Naive thymus-derived CD8-positive, alpha-beta T cell (primary cell): ENCODE measurements at regions of chr15 and their contacts with region 1.

Region 1: GRCh38 chr15:31302778-31303725 is 23.6 kb upstream of the KLF13 start:
- DNase-seq: peak in 3 of 10 donors; percentile 18 to 40 (median 37)
- ATAC-seq: peak; percentile 76
- H3K4me3 Mint-ChIP-seq: peak overlapping the region in 2 of 10 donors; percentile 24 to 27
- H3K27ac Mint-ChIP-seq: peak overlapping the region in 7 of 10 donors; percentile 29 to 81 (median 68)
- H3K4me1 Mint-ChIP-seq: peaks cover 19 to 46% (median 43%) of the 10 kb centered on the region in 4 donors
- H3K27me3 Mint-ChIP-seq: peaks cover 0 to 2% (median 0%) of the 10 kb centered on the region in 5 donors

Region 2: DNA sequence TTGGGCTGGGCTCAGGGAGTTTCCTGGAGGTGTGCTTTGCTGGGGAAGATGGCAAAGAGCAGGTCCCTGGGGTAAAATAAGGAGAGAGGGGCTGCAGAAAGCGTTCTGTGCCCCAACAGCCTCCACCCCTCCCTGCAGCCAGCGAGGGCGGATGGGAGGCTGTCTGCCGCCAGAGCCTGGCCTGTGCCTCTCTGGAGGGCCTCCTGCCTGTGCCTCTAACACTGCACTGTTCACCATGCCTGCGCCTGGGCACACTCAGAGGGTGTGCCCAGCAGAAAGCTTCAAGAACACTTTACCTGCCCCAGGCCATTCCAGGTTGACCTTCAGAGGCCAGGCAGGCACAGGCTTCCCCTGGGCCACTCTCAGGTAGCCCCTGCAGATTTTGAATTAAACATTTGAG is 54.1 kb before region 1 on chr15:
- POLR2A ChIA-PET with region 1: no interaction called
- DNase-seq: no peak
- ATAC-seq: no peak
- H3K4me3 Mint-ChIP-seq: no peak overlapping the region
- H3K27ac Mint-ChIP-seq: peak overlapping the region in 1 of 10 donors; percentile 73
- H3K4me1 Mint-ChIP-seq: peaks cover 5 to 18% (median 5%) of the 10 kb centered on the region in 4 donors
- H3K27me3 Mint-ChIP-seq: no peaks in the 10 kb centered on the region

Region 3: DNA sequence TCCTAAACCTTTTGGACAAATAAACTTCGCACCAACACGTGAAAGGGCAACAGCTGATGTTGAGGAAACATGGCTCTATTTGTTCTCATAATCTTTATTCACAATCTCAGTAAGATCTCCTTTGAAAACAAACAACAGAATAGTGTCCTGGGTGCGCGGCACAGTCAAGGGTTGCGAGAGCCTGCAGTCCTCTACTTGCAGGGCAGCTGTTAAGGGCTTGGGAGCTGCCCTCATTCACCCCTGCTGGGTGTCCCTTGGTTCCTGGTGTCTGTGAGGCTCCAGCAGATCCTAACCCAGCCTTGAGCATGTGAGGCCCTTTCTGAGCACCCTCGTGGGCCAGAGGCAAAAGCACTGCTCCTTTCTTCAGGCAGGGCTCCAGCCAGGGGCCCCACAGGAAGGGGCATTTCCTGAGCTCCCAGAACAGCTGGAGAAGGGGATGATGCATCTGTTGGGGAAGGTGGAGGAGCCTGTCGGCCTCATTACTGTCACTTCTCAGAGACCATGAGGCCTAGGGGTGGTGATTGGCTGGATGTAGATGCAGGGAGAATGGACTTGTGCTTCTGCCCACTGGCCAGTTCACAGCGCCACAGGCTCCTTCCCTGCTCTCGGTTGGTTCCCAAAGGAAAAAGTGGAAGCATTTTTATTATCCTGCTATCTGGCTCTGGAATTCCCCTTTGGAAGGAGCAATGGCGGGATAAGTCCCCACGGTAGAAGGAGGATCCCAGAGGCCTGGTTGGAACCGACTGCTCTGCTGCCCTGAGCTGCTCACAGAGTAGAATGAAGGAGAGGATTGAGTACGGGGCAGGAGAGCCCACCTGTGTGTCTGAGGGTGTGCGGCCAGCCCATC is 28.3 kb before region 1 on chr15:
- POLR2A ChIA-PET with region 1: interaction called, 10 read pairs
- DNase-seq: no peak
- ATAC-seq: no peak
- H3K4me3 Mint-ChIP-seq: no peak overlapping the region
- H3K27ac Mint-ChIP-seq: peak overlapping the region in 8 of 10 donors; percentile 14 to 76 (median 46)
- H3K4me1 Mint-ChIP-seq: peaks cover 11 to 47% (median 41%) of the 10 kb centered on the region in 4 donors
- H3K27me3 Mint-ChIP-seq: no peaks in the 10 kb centered on the region

Region 4: GRCh38 chr15:31316135-31316795 is 13.2 kb after region 1 on chr15:
- POLR2A ChIA-PET with region 1: interaction called, 12 read pairs
- DNase-seq: peak in 1 of 10 donors; percentile 47
- ATAC-seq: peak in 1 of 2 donors; percentile 52
- H3K4me3 Mint-ChIP-seq: no peak overlapping the region
- H3K27ac Mint-ChIP-seq: peak overlapping the region in 2 of 10 donors; percentile 49 to 70
- H3K4me1 Mint-ChIP-seq: peaks cover 16 to 41% (median 36%) of the 10 kb centered on the region in 4 donors
- H3K27me3 Mint-ChIP-seq: no peaks in the 10 kb centered on the region

Region 5: GRCh38 chr15:31374489-31374888 is 71.4 kb after region 1 on chr15:
- POLR2A ChIA-PET with region 1: no interaction called
- DNase-seq: peak in 1 of 10 donors; percentile 15
- ATAC-seq: no peak
- H3K4me3 Mint-ChIP-seq: peak overlapping the region in 3 of 10 donors; percentile 7 to 44 (median 20)
- H3K27ac Mint-ChIP-seq: peak overlapping the region in 8 of 10 donors; percentile 59 to 88 (median 74)
- H3K4me1 Mint-ChIP-seq: peaks cover 39 to 94% (median 84%) of the 10 kb centered on the region in 4 donors
- H3K27me3 Mint-ChIP-seq: no peaks in the 10 kb centered on the region

Region 6: DNA sequence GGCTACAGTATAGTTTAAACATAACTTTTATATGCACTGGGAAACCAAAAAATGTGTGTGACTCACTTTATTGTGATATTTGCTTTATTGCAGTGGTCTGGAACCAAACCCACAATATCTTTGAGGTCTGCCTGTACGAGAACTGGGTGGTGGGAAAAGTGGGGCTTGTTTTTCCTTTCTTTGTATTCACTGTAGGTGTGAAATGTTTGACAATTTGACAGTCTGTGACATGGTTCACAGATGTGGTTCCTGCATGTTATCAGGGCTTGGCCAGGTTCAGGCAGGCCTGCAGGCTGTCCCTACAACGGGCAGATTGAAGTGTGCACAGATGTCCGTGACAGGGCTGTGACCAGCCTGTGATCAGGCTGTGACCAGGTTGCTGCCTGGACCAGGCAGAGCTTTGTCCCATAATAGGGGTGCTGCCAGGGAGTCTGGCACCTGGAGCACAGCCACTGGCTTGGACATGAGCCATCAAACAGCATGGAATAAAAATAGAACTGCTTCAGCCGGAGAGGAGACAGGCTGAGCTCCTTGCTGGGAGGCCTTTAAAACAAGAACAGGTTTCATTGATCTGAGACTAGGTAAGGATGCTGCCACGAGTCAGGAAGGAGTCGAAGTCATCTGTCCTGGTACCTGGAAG is 84.5 kb after region 1 on chr15:
- POLR2A ChIA-PET with region 1: no interaction called
- DNase-seq: peak in 4 of 10 donors; percentile 52 to 68 (median 56)
- ATAC-seq: peak; percentile 29 to 50
- H3K4me3 Mint-ChIP-seq: peak overlapping the region; percentile 50 to 85 (median 74)
- H3K27ac Mint-ChIP-seq: peak overlapping the region; percentile 68 to 98 (median 92)
- H3K4me1 Mint-ChIP-seq: peaks cover 42 to 78% (median 72%) of the 10 kb centered on the region in 4 donors
- H3K27me3 Mint-ChIP-seq: no peaks in the 10 kb centered on the region